Activated CD4-positive, alpha-beta memory T cell treated with anti-CD3 and anti-CD28 coated beads, Interleukin-2, amount 10 ng/mL, durations not matched to agents 7 days and 5 days (primary cell): ENCODE measurements at regions of chr6 and their contacts with region 1.

Region 1: GRCh38 chr6:119313937-119314884 is 35.4 kb downstream of the MAN1A1 start:
- DNase-seq: peak; percentile 68
- H3K4me3 Mint-ChIP-seq: peak overlapping the region; percentile 31
- H3K27ac Mint-ChIP-seq: peak overlapping the region; percentile 93
- H3K4me1 Mint-ChIP-seq: peaks cover 73% of the 10 kb centered on the region
- H3K27me3 Mint-ChIP-seq: no peaks in the 10 kb centered on the region

Region 2: GRCh38 chr6:119129148-119129967 is 184.9 kb before region 1 on chr6:
- CTCF ChIA-PET with region 1: interaction called, 13 read pairs
- POLR2A ChIA-PET with region 1: interaction called, 5 read pairs
- DNase-seq: no peak
- H3K4me3 Mint-ChIP-seq: no peak overlapping the region
- H3K27ac Mint-ChIP-seq: no peak overlapping the region
- H3K4me1 Mint-ChIP-seq: peaks cover 5% of the 10 kb centered on the region
- H3K27me3 Mint-ChIP-seq: peaks cover 2% of the 10 kb centered on the region

Region 3: DNA sequence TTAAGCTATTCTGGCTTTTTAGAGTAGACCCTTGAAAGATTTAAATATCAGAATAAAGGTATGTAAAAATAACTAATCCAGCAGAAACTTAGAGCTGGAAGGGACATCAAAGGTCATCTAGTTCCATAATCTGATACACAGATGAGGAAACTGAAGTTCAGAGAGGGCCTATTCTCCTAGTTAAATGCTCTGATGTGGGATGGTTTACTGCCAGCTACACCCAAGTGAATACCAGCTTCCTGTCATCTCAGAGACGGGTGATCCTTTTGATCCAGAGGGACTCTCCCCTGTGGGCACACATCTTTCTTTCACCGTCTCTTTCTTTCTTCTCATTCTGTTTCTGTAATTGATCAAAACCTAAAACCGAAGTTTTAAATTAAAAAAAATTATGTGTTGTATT is 58.7 kb before region 1 on chr6:
- CTCF ChIA-PET with region 1: no interaction called
- POLR2A ChIA-PET with region 1: no interaction called
- DNase-seq: no peak
- H3K4me3 Mint-ChIP-seq: no peak overlapping the region
- H3K27ac Mint-ChIP-seq: no peak overlapping the region
- H3K4me1 Mint-ChIP-seq: peaks cover 17% of the 10 kb centered on the region
- H3K27me3 Mint-ChIP-seq: no peaks in the 10 kb centered on the region

Region 4: DNA sequence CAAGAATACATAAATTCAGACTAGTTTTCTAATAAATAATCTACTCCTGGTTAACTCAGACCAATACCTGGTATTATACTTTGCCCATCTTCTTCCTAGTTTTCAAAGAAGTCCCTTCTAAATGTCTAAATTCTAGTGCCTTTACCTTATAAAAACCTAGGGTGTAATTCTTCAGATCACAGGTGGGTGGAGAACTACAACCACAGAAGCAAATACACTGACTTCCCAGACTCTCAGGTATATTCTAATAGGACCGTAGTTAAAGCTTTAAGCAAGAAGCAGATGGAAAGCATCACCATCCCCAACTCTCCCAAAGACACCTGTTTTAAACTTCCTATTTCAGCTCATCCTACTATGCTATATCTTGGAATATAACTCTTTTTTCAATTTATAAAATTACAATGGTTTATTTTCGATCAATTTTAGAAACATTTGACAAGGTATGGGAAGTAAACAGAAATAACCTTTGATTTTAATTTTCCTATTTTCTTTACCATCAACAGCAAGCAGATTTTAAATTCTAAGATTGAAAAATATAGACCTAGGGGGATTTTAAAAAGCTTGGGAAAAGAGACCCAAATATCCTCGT is 19.6 kb after region 1 on chr6:
- CTCF ChIA-PET with region 1: interaction called, 7 read pairs
- POLR2A ChIA-PET with region 1: interaction called, 14 read pairs
- DNase-seq: no peak
- H3K4me3 Mint-ChIP-seq: no peak overlapping the region
- H3K27ac Mint-ChIP-seq: no peak overlapping the region
- H3K4me1 Mint-ChIP-seq: peaks cover 57% of the 10 kb centered on the region
- H3K27me3 Mint-ChIP-seq: no peaks in the 10 kb centered on the region